CD4-positive, alpha-beta T cell (primary cell): ENCODE measurements at regions of chr15 and their contacts with region 1.

Region 1: DNA sequence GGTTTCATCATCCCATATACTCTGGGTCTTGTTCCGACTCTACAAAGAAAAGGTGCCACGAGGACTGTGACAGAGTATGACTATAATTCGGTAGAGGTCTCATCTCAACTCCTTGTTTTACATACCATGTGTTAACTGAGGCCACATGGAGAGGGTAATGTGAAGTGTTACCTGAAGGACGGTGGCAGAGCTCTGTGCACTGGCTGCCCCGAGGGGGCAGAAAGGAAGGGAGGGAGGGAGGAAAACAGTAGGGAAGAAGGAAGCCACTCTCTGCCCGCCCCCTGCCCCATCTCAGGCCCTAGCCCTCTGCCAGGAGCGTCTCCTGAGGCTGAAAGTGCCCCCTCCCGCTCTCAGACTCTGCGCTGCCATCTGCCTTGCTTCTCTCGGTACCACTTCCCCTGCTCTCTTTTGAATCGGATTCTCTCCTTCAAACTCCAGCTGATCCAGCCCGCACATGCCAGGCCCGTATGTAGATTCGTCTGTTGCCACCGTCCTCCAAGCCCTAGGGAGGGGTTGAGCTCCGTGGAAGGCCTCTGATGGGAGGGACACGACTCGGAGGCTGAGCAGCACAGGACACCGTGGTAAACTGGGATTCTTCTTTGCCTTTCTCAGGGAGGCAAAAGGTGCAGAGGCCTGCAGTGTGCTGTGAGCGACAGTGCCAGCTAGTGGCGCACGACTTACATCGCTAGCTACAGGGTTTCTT is 70.5 kb upstream of the ATP10A start:
- DNase-seq: peak; percentile 48 to 86 (median 65)
- ATAC-seq: peak; percentile 99
- H3K4me3 ChIP-seq: peak overlapping the region; percentile 48
- H3K4me3 Mint-ChIP-seq: peak overlapping the region; percentile 88
- H3K27ac ChIP-seq: no peak overlapping the region
- H3K27ac Mint-ChIP-seq: no peak overlapping the region
- H3K4me1 ChIP-seq: peaks cover 10% of the 10 kb centered on the region
- H3K4me1 Mint-ChIP-seq: peaks cover 4% of the 10 kb centered on the region
- H3K27me3 ChIP-seq: peaks cover 0 to 2% of the 10 kb centered on the region in 2 experiments
- H3K27me3 Mint-ChIP-seq: peaks cover 15% of the 10 kb centered on the region
- CTCF ChIP-seq: peak; percentile 79

Region 2: GRCh38 chr15:25508369-25509002 is 425.1 kb before region 1 on chr15:
- CTCF ChIA-PET with region 1: no interaction called
- POLR2A ChIA-PET with region 1: no interaction called
- intact Hi-C with region 1: loop called (anchors 2 to 10 kb)
- DNase-seq: peak in 3 of 14 experiments; percentile 3 to 46 (median 35)
- ATAC-seq: no peak
- H3K4me3 ChIP-seq: no peak overlapping the region
- H3K4me3 Mint-ChIP-seq: no peak overlapping the region
- H3K27ac ChIP-seq: no peak overlapping the region
- H3K27ac Mint-ChIP-seq: no peak overlapping the region
- H3K4me1 ChIP-seq: no peaks in the 10 kb centered on the region
- H3K4me1 Mint-ChIP-seq: no peaks in the 10 kb centered on the region
- H3K27me3 ChIP-seq: no peaks in the 10 kb centered on the region
- H3K27me3 Mint-ChIP-seq: peaks cover 10% of the 10 kb centered on the region
- CTCF ChIP-seq: peak; percentile 70

Region 3: GRCh38 chr15:25693321-25694237 is 240.0 kb before region 1 on chr15:
- CTCF ChIA-PET with region 1: no interaction called
- POLR2A ChIA-PET with region 1: no interaction called
- intact Hi-C with region 1: loop called (anchors 1 kb)
- DNase-seq: peak in 9 of 14 experiments; percentile 6 to 44 (median 25)
- ATAC-seq: no peak
- H3K4me3 ChIP-seq: no peak overlapping the region
- H3K4me3 Mint-ChIP-seq: no peak overlapping the region
- H3K27ac ChIP-seq: no peak overlapping the region
- H3K27ac Mint-ChIP-seq: no peak overlapping the region
- H3K4me1 ChIP-seq: no peaks in the 10 kb centered on the region
- H3K4me1 Mint-ChIP-seq: no peaks in the 10 kb centered on the region
- H3K27me3 ChIP-seq: no peaks in the 10 kb centered on the region
- H3K27me3 Mint-ChIP-seq: no peaks in the 10 kb centered on the region
- CTCF ChIP-seq: peak; percentile 39

Region 4: GRCh38 chr15:25739687-25740121 is 193.9 kb before region 1 on chr15:
- CTCF ChIA-PET with region 1: interaction called, 6 read pairs
- POLR2A ChIA-PET with region 1: no interaction called
- intact Hi-C with region 1: loop called (anchors 1 kb)
- DNase-seq: peak in 13 of 14 experiments; percentile 13 to 67 (median 39)
- ATAC-seq: peak; percentile 88
- H3K4me3 ChIP-seq: no peak overlapping the region
- H3K4me3 Mint-ChIP-seq: no peak overlapping the region
- H3K27ac ChIP-seq: no peak overlapping the region
- H3K27ac Mint-ChIP-seq: no peak overlapping the region
- H3K4me1 ChIP-seq: peaks cover 16% of the 10 kb centered on the region
- H3K4me1 Mint-ChIP-seq: peaks cover 44% of the 10 kb centered on the region
- H3K27me3 ChIP-seq: no peaks in the 10 kb centered on the region
- H3K27me3 Mint-ChIP-seq: no peaks in the 10 kb centered on the region
- CTCF ChIP-seq: peak; percentile 51

Region 5: GRCh38 chr15:25783607-25784540 is 149.7 kb before region 1 on chr15:
- CTCF ChIA-PET with region 1: interaction called, 11 read pairs
- POLR2A ChIA-PET with region 1: interaction called, 5 read pairs
- intact Hi-C with region 1: loop called (anchors 2 to 10 kb)
- DNase-seq: peak; percentile 25 to 70 (median 48)
- ATAC-seq: peak; percentile 50
- H3K4me3 ChIP-seq: no peak overlapping the region
- H3K4me3 Mint-ChIP-seq: no peak overlapping the region
- H3K27ac ChIP-seq: no peak overlapping the region
- H3K27ac Mint-ChIP-seq: peak overlapping the region; percentile 47
- H3K4me1 ChIP-seq: peaks cover 26% of the 10 kb centered on the region
- H3K4me1 Mint-ChIP-seq: peaks cover 37% of the 10 kb centered on the region
- H3K27me3 ChIP-seq: no peaks in the 10 kb centered on the region
- H3K27me3 Mint-ChIP-seq: no peaks in the 10 kb centered on the region
- CTCF ChIP-seq: peak; percentile 54

Region 6: DNA sequence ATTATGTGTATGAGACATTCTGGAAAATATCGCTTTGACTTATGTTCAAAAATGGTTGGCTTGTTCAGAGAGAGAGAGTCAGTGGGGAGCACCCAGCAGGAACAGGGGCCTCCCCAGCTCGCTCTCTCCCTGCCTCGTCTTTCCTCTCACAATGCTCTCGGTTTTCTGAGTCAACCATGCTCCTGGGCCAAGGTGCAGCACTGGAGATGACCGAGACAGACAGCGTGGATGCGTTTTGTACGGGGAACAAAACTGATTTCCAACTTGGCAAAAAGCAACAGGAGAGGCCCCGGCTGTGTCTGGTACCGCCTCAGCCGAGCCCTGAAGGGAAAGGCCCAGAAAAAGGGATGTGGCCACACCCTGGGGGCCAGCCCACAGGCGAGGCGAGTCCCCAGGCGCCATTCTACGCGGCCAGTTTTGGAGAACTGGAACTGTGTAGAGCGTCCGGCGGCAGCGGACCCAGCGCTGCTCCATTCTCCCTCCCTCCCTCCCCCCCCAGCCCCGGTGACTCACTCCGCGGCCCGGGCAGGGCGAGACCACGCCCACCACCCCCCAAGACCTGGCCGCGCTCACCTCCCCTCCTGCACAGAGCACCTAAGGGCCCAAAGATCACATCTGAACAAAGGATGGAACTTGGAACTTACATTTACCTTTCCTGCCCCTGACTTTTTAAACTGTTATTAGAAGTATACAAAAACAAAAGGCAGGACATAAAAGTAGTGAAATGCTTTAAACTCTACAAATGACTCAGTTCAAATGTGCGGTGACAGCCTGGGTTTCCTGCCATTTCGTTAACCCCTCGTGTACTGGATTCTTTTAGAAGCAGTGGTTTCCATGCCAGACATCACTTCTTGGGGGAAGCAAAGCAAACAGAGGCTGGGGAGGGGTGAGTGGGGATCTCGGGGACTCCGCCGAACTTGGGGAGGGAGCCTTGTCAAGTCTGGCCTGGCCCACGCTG is 83.2 kb before region 1 on chr15:
- CTCF ChIA-PET with region 1: interaction called, 4 read pairs
- POLR2A ChIA-PET with region 1: interaction called, 3 read pairs
- intact Hi-C with region 1: loop called in 1 of 2 experiments (anchors 10 kb)
- DNase-seq: peak; percentile 44 to 87 (median 70)
- ATAC-seq: peak; percentile 44
- H3K4me3 ChIP-seq: peak overlapping the region; percentile 64
- H3K4me3 Mint-ChIP-seq: peak overlapping the region; percentile 99
- H3K27ac ChIP-seq: peak overlapping the region; percentile 84 to 92
- H3K27ac Mint-ChIP-seq: peak overlapping the region; percentile 93
- H3K4me1 ChIP-seq: peaks cover 80% of the 10 kb centered on the region
- H3K4me1 Mint-ChIP-seq: peaks cover 94% of the 10 kb centered on the region
- H3K27me3 ChIP-seq: no peaks in the 10 kb centered on the region
- H3K27me3 Mint-ChIP-seq: no peaks in the 10 kb centered on the region
- CTCF ChIP-seq: no peak

Region 7: DNA sequence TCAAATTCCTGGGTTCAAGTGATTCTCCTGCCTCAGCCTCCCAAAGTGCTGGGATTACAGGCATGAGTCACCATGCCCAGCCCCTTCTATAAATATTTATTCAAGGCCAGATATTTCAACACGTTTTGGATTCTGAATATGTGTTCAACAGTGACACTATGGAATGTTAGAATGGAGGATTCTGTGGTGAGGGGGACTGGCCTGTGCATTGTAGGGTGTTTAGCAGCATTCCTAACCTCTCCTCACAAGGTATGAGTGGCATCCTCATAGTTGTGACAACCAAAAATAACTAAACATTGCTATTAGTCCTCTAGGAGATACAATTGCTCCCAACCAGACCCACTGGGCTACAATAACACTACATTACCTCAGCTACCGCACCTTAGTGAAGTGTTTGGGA is 33.5 kb after region 1 on chr15:
- CTCF ChIA-PET with region 1: no interaction called
- POLR2A ChIA-PET with region 1: no interaction called
- intact Hi-C with region 1: no loop called
- DNase-seq: no peak
- ATAC-seq: no peak
- H3K4me3 ChIP-seq: no peak overlapping the region
- H3K4me3 Mint-ChIP-seq: no peak overlapping the region
- H3K27ac ChIP-seq: no peak overlapping the region
- H3K27ac Mint-ChIP-seq: no peak overlapping the region
- H3K4me1 ChIP-seq: no peaks in the 10 kb centered on the region
- H3K4me1 Mint-ChIP-seq: no peaks in the 10 kb centered on the region
- H3K27me3 ChIP-seq: peaks cover 0 to 4% of the 10 kb centered on the region in 2 experiments
- H3K27me3 Mint-ChIP-seq: peaks cover 15% of the 10 kb centered on the region
- CTCF ChIP-seq: no peak